Activated CD4-positive, alpha-beta T cell treated with anti-CD3 and anti-CD28 coated beads, Interleukin-2, amount 10 ng/mL, durations not matched to agents 24 days and 14 days (primary cell): ENCODE measurements at regions of chr11 and their contacts with region 1.

Region 1: GRCh38 chr11:33987975-33988580 is 63.5 kb upstream of the CAPRIN1 start:
- DNase-seq: peak; percentile 92
- H3K4me3 Mint-ChIP-seq: no peak overlapping the region
- H3K27ac Mint-ChIP-seq: no peak overlapping the region
- H3K4me1 Mint-ChIP-seq: peaks cover 4% of the 10 kb centered on the region
- H3K27me3 Mint-ChIP-seq: peaks cover 2% of the 10 kb centered on the region

Region 2: DNA sequence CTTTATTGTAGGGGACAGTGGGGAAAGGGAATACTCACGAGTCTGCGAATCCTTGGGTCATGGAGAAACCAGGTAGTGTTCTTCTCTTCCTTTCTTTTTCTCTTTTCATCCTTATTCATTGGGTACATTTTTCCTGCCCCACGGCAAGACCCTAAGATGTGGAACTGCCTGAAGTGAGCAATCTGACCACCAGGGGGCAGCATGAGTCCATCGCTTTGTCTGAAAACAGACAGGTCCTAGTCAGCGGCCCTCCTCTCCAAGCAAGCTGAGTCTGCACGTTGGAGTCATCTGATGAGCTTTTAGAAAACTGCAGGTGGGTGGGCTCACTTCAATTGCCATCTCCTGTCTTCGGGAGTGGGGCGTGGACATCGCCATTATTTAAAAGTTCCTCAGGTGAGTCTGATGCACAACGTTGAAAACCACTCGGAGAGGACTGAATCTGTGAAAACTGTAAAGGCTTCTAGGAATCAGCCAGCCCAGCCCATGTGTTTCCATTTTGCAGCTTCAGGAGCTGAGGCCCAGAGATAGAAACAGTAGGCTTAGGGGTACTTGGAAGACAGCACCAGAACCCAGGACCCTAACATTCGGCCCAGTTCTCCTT is 179.8 kb before region 1 on chr11:
- intact Hi-C with region 1: loop called (anchors 1 kb)
- DNase-seq: peak; percentile 93
- H3K4me3 Mint-ChIP-seq: no peak overlapping the region
- H3K27ac Mint-ChIP-seq: no peak overlapping the region
- H3K4me1 Mint-ChIP-seq: peaks cover 3% of the 10 kb centered on the region
- H3K27me3 Mint-ChIP-seq: peaks cover 35% of the 10 kb centered on the region

Region 3: GRCh38 chr11:33857933-33858371 is 130.1 kb before region 1 on chr11:
- intact Hi-C with region 1: loop called (anchors 1 kb)
- DNase-seq: peak; percentile 90
- H3K4me3 Mint-ChIP-seq: no peak overlapping the region
- H3K27ac Mint-ChIP-seq: no peak overlapping the region
- H3K4me1 Mint-ChIP-seq: no peaks in the 10 kb centered on the region
- H3K27me3 Mint-ChIP-seq: peaks cover 43% of the 10 kb centered on the region

Region 4: DNA sequence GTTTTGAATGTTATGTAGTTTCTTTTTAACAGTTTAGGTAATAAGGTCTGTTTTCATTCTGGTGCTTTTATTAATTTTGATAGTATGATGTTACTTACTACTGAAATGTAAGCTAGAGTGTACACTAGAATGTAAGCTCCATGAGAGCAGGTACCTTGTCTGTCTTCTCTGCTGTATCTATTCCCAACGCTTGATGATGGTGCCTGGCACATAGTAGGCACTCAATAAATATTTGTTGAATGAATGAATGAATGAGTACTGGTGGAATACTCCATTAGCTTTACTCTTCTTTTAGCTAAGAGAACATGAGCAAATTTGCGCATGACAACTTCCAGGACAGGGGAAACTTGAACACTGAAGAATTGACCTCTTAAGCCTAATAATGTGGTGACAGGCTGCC is 110.7 kb after region 1 on chr11:
- intact Hi-C with region 1: no loop called
- DNase-seq: no peak
- H3K4me3 Mint-ChIP-seq: no peak overlapping the region
- H3K27ac Mint-ChIP-seq: peak overlapping the region; percentile 62
- H3K4me1 Mint-ChIP-seq: peaks cover 3% of the 10 kb centered on the region
- H3K27me3 Mint-ChIP-seq: no peaks in the 10 kb centered on the region